ENCODE measurements at regions of chr15 and their contacts with region 1.

Region 1: DNA sequence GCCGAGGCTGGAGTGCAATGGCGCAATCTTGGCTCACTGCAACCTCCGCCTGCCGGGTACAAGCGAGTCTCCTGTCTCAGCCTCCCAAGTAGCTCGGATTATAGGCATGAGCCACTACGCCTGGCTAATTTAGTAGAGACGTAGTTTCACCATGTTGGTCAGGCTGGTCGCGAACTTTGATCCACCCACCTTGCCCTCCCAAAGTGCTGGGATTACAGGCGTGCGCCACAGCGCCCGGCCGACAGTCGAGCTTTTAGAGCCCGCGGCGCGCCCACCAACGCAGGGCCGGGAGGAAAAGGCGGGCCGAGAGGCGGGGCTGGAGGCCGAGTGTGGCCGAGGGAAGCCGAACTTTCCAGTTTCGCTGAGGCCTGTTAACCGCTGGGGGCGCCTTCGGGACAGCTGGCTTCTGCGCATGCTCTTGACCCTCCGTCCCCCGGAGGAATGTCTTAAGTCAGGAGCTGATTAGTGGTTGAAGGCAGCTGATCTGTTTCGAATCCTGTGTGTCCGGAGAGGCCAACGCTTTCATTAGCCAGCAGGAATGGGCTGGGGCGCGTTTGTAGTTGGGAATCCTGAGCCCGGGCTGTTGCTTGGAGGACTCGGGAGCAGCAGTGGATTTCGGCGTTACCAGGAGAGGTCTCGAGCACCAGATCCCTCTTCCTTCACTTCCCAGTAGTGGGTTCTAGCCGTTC is 10.0 kb downstream of the RPLP1 start:
- DNase-seq: peak; percentile 96
- H3K4me3 ChIP-seq: peak overlapping the region; percentile 60
- CTCF ChIP-seq: peak; percentile 93

Region 2: GRCh38 chr15:69422336-69422895 is 40.2 kb before region 1 on chr15:
- CTCF ChIA-PET with region 1: interaction called, 11 read pairs
- POLR2A ChIA-PET with region 1: interaction called, 5 read pairs
- DNase-seq: no peak
- H3K4me3 ChIP-seq: no peak overlapping the region
- CTCF ChIP-seq: no peak

Measured in AG04449 (cell line).